PC-9 (cell line): ENCODE measurements at regions of chr19 and their contacts with region 1.

Region 1: DNA sequence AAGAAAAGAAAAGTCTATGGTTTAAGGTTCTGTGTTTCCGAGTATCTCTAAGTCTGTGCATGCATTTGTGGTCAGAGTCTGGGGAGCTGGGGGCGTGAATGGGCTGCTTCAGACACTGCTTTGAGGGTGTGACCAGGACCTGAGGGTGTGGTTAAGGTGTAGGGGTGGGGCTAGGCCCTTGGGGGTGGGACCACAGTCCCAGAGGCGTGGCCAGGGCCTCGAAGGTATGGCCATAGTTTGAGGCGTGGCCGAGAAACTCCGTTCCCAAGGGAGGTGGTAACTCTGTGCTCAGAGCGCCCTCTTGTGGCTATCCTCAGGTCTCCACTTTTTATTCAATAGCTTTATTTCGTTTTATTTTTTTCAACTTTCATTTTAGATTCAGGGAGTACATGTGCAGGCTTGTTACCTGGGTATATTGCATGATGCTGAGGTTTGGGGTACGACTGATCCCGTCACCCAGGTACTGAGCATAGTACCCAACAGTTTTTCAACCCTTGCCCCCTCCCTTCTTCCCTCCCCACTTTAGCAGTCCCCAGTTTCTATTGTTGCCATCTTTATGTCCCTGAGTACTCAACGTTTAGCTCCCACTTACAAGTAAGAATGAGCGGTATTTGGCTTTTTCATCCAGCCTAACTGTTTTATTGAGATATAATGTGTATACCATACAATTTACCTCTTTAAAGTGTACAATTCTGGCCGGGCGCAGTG is 7.0 kb upstream of the CBLC start:
- DNase-seq: peak; percentile 90 to 97
- H3K4me3 ChIP-seq: no peak overlapping the region
- H3K27ac ChIP-seq: peak overlapping the region; percentile 48
- H3K4me1 ChIP-seq: peaks cover 48% of the 10 kb centered on the region
- H3K27me3 ChIP-seq: no peaks in the 10 kb centered on the region
- CTCF ChIP-seq: peak; percentile 96

Region 2: GRCh38 chr19:44576843-44577565 is 193.7 kb before region 1 on chr19:
- CTCF ChIA-PET with region 1: no interaction called
- POLR2A ChIA-PET with region 1: no interaction called
- intact Hi-C with region 1: loop called (anchors 2 kb)
- DNase-seq: peak; percentile 58 to 69
- H3K4me3 ChIP-seq: no peak overlapping the region
- H3K27ac ChIP-seq: peak overlapping the region; percentile 97
- H3K4me1 ChIP-seq: peaks cover 56% of the 10 kb centered on the region
- H3K27me3 ChIP-seq: no peaks in the 10 kb centered on the region
- CTCF ChIP-seq: peak; percentile 80

Region 3: DNA sequence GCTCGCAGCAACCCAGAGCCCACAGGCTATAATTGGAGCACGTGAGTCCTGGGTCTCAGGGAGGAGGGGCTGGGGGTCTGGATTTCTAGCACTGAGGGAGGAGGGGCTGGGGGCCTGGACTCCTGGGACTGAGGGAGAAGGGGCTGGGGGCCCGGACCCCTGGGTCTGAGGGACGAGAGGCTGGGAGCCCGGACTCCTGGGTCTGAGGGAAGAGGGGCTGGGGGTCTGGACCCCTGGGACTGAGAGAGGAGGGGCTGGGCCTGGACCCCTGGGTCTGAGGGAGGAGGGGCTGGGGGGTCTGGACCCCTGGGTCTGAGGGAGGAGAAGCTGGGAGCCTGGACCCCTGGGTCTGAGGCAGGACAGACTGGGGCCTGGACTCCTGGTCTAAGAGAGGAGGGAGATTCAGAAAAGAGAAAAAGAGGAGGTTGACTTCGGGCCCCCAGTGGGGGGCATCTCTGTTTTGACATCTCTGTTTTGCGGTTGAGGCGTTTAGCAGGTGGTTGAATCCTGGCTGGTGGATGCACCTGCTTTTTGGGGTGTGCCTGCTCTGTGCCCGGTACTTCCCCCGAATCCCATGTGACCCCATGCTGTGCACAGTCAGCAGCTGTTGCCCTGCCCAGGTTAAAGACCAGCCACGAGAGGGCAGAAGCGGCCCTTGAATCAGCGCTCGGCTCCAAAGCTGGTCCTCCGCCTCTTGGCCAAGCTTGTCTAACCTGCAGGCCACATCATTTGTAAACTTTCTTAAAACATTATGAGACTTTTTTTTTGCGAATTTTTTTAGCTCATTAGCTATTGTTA is 116.5 kb before region 1 on chr19:
- CTCF ChIA-PET with region 1: interaction called, 8 read pairs
- POLR2A ChIA-PET with region 1: no interaction called
- intact Hi-C with region 1: loop called (anchors 1 kb)
- DNase-seq: peak; percentile 76 to 84
- H3K4me3 ChIP-seq: no peak overlapping the region
- H3K27ac ChIP-seq: peak overlapping the region; percentile 33
- H3K4me1 ChIP-seq: peaks cover 8% of the 10 kb centered on the region; the same call in 1 of the 2 replicates
- H3K27me3 ChIP-seq: no peaks in the 10 kb centered on the region
- CTCF ChIP-seq: peak; percentile 77

Region 4: DNA sequence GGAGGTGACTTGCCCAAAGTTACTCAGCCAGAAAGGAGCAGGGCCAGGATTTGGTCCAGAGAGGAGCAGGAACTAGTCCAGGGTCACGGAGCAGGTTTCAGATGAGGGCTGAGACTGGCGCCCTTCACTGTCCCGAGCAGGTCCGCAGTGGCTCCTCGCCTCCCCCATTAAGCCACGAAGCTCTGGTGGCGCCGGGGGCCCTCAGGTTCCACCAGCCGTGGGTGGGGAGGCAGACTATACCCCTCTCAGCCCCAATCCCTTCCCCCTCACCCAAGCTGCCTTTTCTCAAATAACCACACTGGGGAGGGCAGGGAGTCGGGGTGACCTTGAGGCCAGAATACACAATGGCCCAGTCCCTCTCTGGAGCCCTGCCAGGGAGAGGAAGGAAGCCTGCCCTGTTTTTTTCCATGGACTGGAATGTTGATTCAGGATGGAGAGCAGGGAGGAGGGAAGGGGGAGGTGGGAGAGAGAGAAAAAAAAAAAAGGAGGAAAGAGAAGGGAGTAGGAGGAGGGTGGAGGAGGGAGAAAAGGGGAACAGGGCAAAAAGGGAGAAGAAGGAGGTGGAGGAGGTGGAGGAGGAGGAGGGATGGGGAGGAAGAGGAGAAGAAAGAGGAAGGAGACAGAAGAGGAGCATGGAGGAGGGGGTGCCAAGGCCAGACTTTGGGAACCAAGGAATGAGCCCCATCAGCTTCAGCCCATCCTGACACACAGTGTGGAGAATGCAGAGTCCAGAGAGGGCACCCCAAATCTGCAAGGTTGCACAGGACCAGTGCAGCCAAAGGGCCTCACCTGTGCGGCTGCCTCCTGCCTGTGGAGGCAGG is 52.1 kb before region 1 on chr19:
- CTCF ChIA-PET with region 1: interaction called, 55 read pairs
- POLR2A ChIA-PET with region 1: interaction called, 26 read pairs
- intact Hi-C with region 1: no loop called
- DNase-seq: peak; percentile 75 to 79
- H3K4me3 ChIP-seq: peak overlapping the region; percentile 32; the same call in 1 of the 2 replicates
- H3K27ac ChIP-seq: peak overlapping the region; percentile 86
- H3K4me1 ChIP-seq: peaks cover 57% of the 10 kb centered on the region
- H3K27me3 ChIP-seq: no peaks in the 10 kb centered on the region
- CTCF ChIP-seq: no peak

Region 5: GRCh38 chr19:44746946-44747738 is 23.6 kb before region 1 on chr19:
- CTCF ChIA-PET with region 1: interaction called, 10 read pairs
- POLR2A ChIA-PET with region 1: no interaction called
- intact Hi-C with region 1: loop called (anchors 1 kb)
- DNase-seq: peak; percentile 87 to 97
- H3K4me3 ChIP-seq: peak overlapping the region; percentile 78
- H3K27ac ChIP-seq: peak overlapping the region; percentile 95
- H3K4me1 ChIP-seq: peaks cover 66% of the 10 kb centered on the region
- H3K27me3 ChIP-seq: no peaks in the 10 kb centered on the region
- CTCF ChIP-seq: no peak

Region 6: DNA sequence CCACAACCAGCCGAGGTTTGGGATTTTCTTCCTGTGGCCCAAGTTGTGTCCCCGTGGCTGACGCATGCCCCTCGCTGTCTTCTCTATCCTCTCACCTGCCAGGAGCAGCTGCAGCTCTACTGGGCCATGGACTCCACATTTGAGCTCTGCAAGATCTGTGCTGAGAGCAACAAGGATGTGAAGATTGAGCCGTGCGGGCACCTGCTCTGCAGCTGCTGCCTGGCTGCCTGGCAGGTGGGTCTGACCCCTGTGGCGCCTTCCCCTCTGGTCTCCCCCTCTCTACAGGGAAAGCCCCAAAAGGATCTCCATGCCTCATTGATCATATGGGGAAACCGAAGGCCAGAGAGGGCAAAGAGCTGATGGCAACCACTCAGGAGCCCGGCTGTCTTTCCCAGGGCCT is 21.6 kb after region 1 on chr19:
- CTCF ChIA-PET with region 1: no interaction called
- POLR2A ChIA-PET with region 1: no interaction called
- intact Hi-C with region 1: no loop called
- DNase-seq: no peak
- H3K4me3 ChIP-seq: no peak overlapping the region
- H3K27ac ChIP-seq: no peak overlapping the region
- H3K4me1 ChIP-seq: no peaks in the 10 kb centered on the region
- H3K27me3 ChIP-seq: no peaks in the 10 kb centered on the region
- CTCF ChIP-seq: no peak

Region 7: DNA sequence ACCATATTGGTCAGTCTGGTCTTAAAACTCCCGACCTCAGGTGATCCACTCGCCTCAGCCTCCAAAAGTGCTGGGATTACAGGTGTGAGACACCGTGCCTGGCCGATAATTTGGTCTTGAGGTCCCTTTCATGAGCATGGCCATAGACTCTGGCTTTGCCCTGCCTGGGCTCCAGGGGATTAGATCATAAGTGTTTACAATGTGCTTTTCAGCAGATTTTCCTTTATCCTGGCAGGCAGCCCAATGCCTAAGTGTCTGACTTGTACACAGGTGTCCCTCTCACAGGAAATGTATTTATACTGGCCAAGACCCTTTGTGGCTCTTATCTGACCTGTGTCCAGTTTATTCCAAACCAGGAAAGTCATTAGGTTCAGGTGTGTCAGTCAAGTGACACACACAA is 54.1 kb after region 1 on chr19:
- CTCF ChIA-PET with region 1: no interaction called
- POLR2A ChIA-PET with region 1: no interaction called
- intact Hi-C with region 1: no loop called
- DNase-seq: no peak
- H3K4me3 ChIP-seq: no peak overlapping the region
- H3K27ac ChIP-seq: no peak overlapping the region
- H3K4me1 ChIP-seq: no peaks in the 10 kb centered on the region
- H3K27me3 ChIP-seq: no peaks in the 10 kb centered on the region; the same call in 1 of the 2 replicates
- CTCF ChIP-seq: no peak